A673 (cell line): ENCODE measurements at regions of chr6 and their contacts with region 1.

Region 1: GRCh38 chr6:2848851-2849250 is 7.2 kb upstream of the SERPINB1 start:
- DNase-seq: no peak
- H3K4me3 ChIP-seq: no peak overlapping the region
- H3K27ac ChIP-seq: no peak overlapping the region
- H3K4me1 ChIP-seq: peaks cover 14% of the 10 kb centered on the region
- H3K27me3 ChIP-seq: no peaks in the 10 kb centered on the region
- CTCF ChIP-seq: no peak

Region 2: GRCh38 chr6:2385471-2385983 is 463.3 kb before region 1 on chr6:
- CTCF ChIA-PET with region 1: no interaction called
- POLR2A ChIA-PET with region 1: no interaction called
- intact Hi-C with region 1: no loop called
- DNase-seq: no peak
- H3K4me3 ChIP-seq: no peak overlapping the region
- H3K27ac ChIP-seq: no peak overlapping the region
- H3K4me1 ChIP-seq: no peaks in the 10 kb centered on the region
- H3K27me3 ChIP-seq: no peaks in the 10 kb centered on the region
- CTCF ChIP-seq: no peak

Region 3: DNA sequence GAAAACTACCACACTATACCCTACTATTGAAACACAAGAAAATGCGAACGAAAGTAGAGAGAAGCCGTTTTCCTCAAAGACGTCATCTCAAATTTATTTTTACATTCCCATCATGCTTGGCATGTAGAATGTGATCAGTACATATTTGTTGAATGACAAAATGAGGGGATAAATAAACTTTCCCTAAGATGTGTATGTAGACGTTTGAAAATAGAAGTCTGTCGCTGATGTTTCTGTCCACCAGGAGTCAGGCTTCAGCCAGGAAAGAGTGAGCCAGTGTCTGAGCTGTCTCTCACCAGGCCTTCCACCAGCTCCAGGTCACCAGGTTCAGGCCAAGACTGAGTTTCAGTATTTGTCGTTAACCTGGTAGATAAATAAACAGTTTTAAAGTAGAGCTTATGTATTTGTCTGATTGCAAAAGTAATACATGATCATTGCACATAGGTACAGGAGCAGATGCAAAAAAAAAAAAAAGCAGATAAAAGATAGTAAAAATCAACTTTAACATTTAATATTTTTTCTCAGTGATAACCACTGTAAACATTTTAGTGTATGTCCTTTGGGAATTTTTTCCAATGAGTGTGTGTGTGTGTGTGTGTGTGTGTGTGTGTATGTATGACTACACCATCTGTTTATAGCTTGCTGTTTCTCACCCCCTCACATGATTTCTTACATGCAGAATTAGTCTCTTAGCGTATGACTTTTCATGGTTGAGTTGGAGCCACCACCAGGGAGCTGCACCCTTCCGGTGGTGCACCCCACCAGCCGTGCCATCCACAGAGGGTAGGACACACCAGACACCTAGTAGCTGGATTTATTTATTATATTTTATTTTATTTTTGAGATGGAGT is 57.5 kb before region 1 on chr6:
- CTCF ChIA-PET with region 1: interaction called, 13 read pairs
- POLR2A ChIA-PET with region 1: no interaction called
- intact Hi-C with region 1: loop called (anchors 2 kb)
- DNase-seq: peak; percentile 78
- H3K4me3 ChIP-seq: no peak overlapping the region
- H3K27ac ChIP-seq: no peak overlapping the region
- H3K4me1 ChIP-seq: peaks cover 17% of the 10 kb centered on the region
- H3K27me3 ChIP-seq: no peaks in the 10 kb centered on the region
- CTCF ChIP-seq: peak; percentile 87

Region 4: DNA sequence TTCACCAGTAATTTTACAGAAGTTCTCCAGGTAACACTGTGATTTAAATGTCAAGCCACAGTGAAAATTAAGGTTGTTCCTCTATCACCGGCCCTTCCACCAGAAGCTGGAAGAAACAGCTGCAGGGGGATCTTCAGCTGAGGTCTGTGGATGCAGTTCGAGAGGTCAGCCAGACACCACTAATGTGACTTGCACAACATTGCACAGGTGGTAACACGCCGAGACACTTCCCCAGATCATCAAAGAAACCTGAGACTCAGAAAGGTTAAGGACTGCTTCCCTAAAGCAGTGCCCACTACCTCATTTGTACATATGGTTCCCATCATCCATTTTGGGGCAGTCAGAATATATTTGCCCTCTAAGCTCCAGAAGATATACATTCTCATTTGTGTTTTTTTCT is 62.3 kb after region 1 on chr6:
- CTCF ChIA-PET with region 1: interaction called, 5 read pairs
- POLR2A ChIA-PET with region 1: no interaction called
- intact Hi-C with region 1: loop called (anchors 5 kb)
- DNase-seq: no peak
- H3K4me3 ChIP-seq: no peak overlapping the region
- H3K27ac ChIP-seq: no peak overlapping the region
- H3K4me1 ChIP-seq: no peaks in the 10 kb centered on the region
- H3K27me3 ChIP-seq: no peaks in the 10 kb centered on the region
- CTCF ChIP-seq: no peak

Region 5: DNA sequence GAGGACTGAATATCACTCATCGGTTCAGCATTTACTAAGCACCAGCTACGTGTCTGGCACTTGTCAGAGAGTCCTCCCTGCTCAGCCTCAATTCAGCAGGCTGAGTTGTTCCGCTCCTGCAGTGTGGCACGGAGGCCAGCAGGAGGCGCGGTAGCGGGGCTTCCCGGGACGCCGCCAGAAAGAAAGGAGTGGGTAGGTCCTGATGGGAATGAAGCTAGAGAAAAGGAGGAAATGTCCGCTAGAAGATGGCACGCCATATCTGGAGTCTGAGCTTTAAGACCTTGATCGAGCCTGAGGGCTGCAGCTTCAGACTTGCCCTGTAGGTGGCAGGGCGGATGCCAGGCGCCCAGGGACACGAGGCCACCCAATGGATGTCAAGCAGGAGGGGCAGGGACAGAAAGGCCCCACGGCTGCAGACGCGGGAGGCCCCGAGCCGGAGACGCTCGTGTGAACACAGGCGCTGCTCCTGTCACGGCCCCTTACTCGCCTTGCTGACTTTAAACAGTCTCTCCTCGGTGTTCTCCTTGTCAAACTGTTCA is 103.8 kb after region 1 on chr6:
- CTCF ChIA-PET with region 1: interaction called, 11 read pairs
- POLR2A ChIA-PET with region 1: no interaction called
- intact Hi-C with region 1: no loop called
- DNase-seq: peak; percentile 89
- H3K4me3 ChIP-seq: no peak overlapping the region
- H3K27ac ChIP-seq: no peak overlapping the region
- H3K4me1 ChIP-seq: peaks cover 5% of the 10 kb centered on the region
- H3K27me3 ChIP-seq: no peaks in the 10 kb centered on the region
- CTCF ChIP-seq: peak; percentile 100